Tibial artery (tissue), 4 donors: ENCODE measurements at regions of chr20 and their contacts with region 1.

Region 1: DNA sequence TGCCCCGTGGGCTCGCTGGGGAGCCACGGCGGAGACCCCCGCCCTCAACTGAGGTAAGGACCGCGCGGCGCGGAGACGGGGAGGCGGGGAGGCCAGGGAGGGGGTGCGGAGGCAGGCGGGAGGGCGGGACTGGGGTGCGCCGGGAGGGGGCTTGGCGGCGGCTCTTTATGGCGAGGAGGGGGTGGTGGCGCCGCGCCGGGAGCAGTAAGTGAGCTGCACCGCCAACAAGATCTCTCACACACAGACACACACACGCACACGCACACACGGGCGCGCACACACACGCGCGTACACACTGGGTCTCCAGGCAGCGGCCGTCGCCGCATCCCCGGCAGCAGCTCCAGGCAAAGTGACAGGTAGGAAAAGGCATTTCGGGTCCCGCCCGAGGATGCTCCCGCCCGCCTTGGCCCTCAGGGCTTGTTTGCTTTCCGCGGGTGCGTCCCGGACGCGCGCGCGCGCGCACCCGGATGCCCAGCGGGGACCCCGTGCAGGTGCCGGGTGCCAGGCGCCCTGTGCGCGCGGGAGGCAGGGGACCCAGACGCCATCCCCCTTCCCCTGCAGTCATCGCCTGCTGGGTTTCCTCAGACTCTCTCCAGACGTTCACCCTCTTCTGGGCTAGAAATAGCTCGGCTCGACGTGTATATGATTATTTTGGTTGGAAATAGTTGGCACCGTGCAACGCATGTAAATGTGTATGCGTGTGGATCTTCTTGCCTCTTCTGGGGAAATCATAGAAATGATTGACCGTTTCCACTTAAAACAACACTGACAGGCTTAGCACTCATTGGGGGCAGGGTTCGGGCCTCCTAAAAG is at the start of gene PLCB4:
- DNase-seq: peak; percentile 35 to 75
- H3K4me3 ChIP-seq: peak within 1 kb of the TSS; percentile 76 to 86
- H3K27ac ChIP-seq: peak within 1 kb of the TSS; percentile 87 to 93
- H3K4me1 ChIP-seq: peaks cover 0 to 52% (median 2%) of the 10 kb centered on the region in 4 donors
- H3K27me3 ChIP-seq: no peaks in the 10 kb centered on the region
- CTCF ChIP-seq: no peak

Region 2: DNA sequence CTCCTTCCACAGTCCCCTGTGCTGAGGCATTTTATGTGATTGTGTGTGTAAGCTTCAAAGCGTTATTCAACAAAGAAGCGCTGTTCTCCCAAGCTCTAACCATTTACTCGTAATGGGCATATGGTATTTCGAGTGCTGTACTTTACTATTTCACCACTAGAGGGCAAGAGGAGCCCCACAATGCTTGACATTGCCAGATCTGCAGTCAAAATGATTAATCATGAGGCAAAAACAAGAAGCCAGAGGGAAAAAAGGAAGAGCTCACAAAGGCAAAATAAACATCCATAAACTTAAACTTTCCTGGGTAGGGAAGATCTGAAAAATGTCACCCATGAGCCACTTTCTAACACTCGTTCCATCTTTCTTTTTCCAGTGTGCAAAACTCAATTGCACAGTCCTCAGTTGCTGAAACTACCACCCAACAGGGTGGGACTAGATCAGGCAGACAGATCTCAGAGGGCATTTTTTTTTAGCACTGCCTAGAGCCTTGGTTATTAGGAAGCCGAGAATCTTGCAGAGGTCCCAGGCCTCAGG is 215.2 kb before region 1 on chr20:
- intact Hi-C with region 1: loop called (anchors 10 kb)
- DNase-seq: no peak
- H3K4me3 ChIP-seq: peak overlapping the region in 1 of 2 donors; percentile 24
- H3K27ac ChIP-seq: peak overlapping the region; percentile 52 to 66
- H3K4me1 ChIP-seq: peaks cover 0 to 43% (median 14%) of the 10 kb centered on the region in 4 donors
- H3K27me3 ChIP-seq: no peaks in the 10 kb centered on the region
- CTCF ChIP-seq: peak; percentile 87 to 94

Region 3: DNA sequence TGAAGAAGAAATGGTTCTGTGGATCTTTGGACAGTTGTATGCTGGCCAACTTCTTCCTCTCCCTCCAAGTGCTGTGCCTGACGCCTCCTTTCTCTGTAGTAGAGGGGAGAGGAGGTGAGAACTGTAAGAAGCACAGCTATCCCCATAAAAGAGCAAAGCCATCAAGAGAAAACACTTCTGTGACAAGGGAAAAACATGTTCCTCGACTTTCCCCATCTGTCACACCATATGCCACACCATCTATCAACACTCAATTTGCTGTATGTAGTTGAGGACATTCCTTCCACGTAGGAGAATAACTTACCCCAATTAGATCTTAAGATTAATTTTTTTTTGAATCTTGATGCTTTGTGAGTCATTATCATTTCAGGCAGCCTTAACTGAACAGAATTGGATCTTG is 156.3 kb before region 1 on chr20:
- intact Hi-C with region 1: loop called (anchors 5 kb)
- DNase-seq: no peak
- H3K4me3 ChIP-seq: no peak overlapping the region
- H3K27ac ChIP-seq: no peak overlapping the region
- H3K4me1 ChIP-seq: no peaks in the 10 kb centered on the region
- H3K27me3 ChIP-seq: no peaks in the 10 kb centered on the region
- CTCF ChIP-seq: no peak